Caco-2 (cell line): ENCODE measurements at regions of chr2 and their contacts with region 1.

Region 1: DNA sequence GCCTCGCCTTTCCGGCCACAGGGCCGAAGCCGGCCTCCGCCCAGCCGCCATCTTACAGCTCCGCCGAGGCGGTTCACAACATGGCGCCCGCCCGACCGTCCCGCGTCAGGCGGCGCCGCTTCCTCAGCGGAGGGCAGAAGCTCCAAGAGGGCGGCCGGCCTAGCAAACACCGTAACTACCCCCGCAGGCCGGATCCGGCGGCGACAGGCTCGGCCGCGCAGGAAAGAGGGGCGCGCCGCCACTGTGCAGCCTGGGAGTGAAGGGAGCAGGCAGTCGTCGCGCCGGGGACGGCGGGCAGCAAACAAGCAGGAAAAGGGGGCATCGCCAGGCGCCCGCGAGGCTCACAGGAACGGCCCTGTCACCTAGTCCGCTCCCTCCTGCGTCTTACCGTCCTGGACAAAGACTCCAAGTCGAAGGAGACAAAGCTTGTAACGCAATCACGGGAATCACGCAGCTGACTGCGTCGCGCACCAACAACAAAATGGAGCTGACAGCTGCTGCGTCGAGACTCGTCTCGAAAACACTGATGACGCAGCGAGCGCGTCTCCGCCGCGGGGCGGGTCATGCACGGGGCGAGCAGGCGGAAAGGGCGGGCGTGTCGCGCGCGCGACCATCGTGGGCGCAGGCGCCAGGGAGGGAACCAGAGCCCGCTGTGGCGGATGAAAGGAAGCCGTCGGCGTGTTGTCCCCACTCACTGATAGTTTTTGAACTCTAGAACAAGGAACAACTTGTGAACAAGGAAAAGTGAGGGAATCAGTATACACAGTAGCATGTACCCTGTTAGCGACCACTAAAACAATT is at the start of gene CLK1:
- DNase-seq: peak; percentile 94
- H3K4me3 ChIP-seq: peak within 1 kb of the TSS; percentile 96
- H3K4me3 Mint-ChIP-seq: peak within 1 kb of the TSS; percentile 84
- H3K27ac Mint-ChIP-seq: peak within 1 kb of the TSS; percentile 96
- H3K4me1 ChIP-seq: peaks cover 14% of the 10 kb centered on the region
- H3K4me1 Mint-ChIP-seq: peaks cover 25% of the 10 kb centered on the region
- H3K27me3 ChIP-seq: no peaks in the 10 kb centered on the region
- H3K27me3 Mint-ChIP-seq: no peaks in the 10 kb centered on the region
- CTCF ChIP-seq: no peak
- total RNA-seq, gene CLK1: 62.6 and 68.0 TPM in 2 replicates

Region 2: GRCh38 chr2:200650195-200650594 is 214.2 kb before region 1 on chr2:
- CTCF ChIA-PET with region 1: no interaction called
- POLR2A ChIA-PET with region 1: no interaction called
- intact Hi-C with region 1: no loop called
- DNase-seq: no peak
- H3K4me3 ChIP-seq: no peak overlapping the region
- H3K4me3 Mint-ChIP-seq: no peak overlapping the region
- H3K27ac Mint-ChIP-seq: no peak overlapping the region
- H3K4me1 ChIP-seq: peaks cover 10% of the 10 kb centered on the region
- H3K4me1 Mint-ChIP-seq: no peaks in the 10 kb centered on the region
- H3K27me3 ChIP-seq: no peaks in the 10 kb centered on the region
- H3K27me3 Mint-ChIP-seq: no peaks in the 10 kb centered on the region
- CTCF ChIP-seq: no peak

Region 3: GRCh38 chr2:200756618-200757321 is 107.6 kb before region 1 on chr2:
- CTCF ChIA-PET with region 1: no interaction called
- POLR2A ChIA-PET with region 1: interaction called, 5 read pairs
- intact Hi-C with region 1: loop called (anchors 5 kb)
- DNase-seq: peak; percentile 85 to 90
- H3K4me3 ChIP-seq: no peak overlapping the region
- H3K4me3 Mint-ChIP-seq: peak overlapping the region; percentile 65
- H3K27ac Mint-ChIP-seq: peak overlapping the region; percentile 80
- H3K4me1 ChIP-seq: peaks cover 51% of the 10 kb centered on the region
- H3K4me1 Mint-ChIP-seq: peaks cover 54% of the 10 kb centered on the region
- H3K27me3 ChIP-seq: no peaks in the 10 kb centered on the region
- H3K27me3 Mint-ChIP-seq: no peaks in the 10 kb centered on the region
- CTCF ChIP-seq: no peak

Region 4: DNA sequence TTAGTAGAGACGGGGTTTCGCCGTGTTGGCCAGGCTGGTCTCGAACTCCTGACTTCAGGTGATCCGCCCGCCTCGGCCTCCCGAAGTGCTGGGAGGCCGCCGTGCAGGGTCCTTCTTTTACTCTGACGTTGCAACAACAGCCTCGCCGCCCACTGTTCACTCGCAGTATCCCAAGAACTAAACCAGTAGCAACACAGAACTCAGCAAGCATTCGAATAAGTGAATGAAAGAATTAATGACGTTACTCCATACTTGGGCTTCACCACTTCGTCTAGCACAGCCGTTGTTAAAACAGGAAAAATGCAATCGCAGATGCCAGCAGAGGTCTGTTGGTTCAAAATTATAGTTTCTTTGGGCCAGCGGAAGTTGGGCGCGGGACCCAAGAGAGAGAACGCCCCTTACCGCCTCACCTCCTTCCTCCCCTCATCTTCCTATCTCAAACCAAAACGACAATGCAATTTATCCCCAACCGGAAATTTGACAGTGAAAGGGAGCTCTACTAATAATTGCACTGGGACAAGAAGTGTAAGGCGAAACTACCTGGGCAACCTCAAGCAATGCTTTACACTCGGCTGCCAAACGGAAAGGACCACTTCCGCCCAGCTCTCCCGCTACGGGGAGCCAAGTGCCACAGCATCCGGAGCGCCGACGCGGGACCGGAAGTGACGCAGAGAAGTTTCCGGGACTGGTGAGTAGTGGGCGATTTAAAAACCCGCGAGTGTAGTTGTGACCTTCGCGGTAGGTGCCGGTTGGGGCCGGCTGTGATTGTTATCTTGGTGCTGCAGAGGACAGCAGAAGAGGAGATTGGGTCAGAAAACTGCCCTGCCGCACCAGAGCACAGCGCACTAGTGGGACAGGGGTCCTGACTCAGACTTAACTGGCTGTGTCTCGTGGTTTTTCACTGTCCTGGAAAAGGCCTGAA is 24.6 kb after region 1 on chr2 and contains the starts of genes NIF3L1 and PPIL3:
- CTCF ChIA-PET with region 1: interaction called, 6 read pairs
- POLR2A ChIA-PET with region 1: interaction called, 28 read pairs
- intact Hi-C with region 1: loop called (anchors 1 kb)
- DNase-seq: peak; percentile 98 to 99
- H3K4me3 ChIP-seq: peak within 1 kb of the TSS; percentile 56
- H3K4me3 Mint-ChIP-seq: peak within 1 kb of the TSS; percentile 89
- H3K27ac Mint-ChIP-seq: peak within 1 kb of the TSS; percentile 97
- H3K4me1 ChIP-seq: 0 out of 2 replicates have a peak, but pooled peaks cover 3% of the 10 kb centered on the region
- H3K4me1 Mint-ChIP-seq: peaks cover 19% of the 10 kb centered on the region
- H3K27me3 ChIP-seq: no peaks in the 10 kb centered on the region
- H3K27me3 Mint-ChIP-seq: no peaks in the 10 kb centered on the region
- CTCF ChIP-seq: no peak
- total RNA-seq, gene NIF3L1: 40.7 and 49.7 TPM in 2 replicates
- total RNA-seq, gene PPIL3: 17.6 and 25.0 TPM in 2 replicates